K562 (cell line): ENCODE measurements at regions of chr17 and their contacts with region 1.

Region 1: DNA sequence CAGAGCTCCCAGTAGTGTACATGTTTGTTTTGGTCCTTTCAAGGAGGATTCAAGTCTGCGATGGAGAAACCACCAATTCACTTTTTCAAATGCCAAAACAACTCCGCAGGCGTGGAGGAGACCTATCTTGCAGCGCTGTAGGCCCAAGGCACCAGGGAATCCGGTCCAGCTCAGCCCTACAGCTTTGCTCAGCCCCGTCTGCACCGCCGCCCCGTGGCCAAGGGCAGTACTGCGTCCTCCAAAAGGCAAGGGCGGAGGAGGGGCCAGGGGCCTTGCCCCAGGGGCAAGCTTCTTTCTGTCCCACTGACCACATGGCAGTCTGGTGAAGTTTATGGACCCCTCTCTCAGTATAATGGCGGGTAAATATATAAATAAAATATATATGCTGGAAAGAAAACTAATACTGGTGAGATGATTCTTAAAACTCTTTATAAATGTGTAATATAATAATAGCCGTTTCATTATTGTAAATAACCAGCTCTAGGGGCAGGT is 709 bp upstream of the CD300LG start:
- DNase-seq: peak; percentile 83 to 92 (median 90)
- ATAC-seq: peak; percentile 99
- H3K4me3 ChIP-seq: no peak overlapping the region
- H3K27ac ChIP-seq: no peak overlapping the region
- H3K4me1 ChIP-seq: peaks cover 6 to 17% of the 10 kb centered on the region in 2 experiments; a peak in 2 of 5 replicates
- H3K27me3 ChIP-seq: peaks cover 10 to 21% of the 10 kb centered on the region in 2 experiments
- CTCF ChIP-seq: peak; percentile 86 to 97 (median 95)
- EP300 ChIP-seq: no peak
- POLR2A ChIP-seq: no peak
- RAD21 ChIP-seq: peak; percentile 32 to 83; a peak in 3 of 4 replicates

Region 2: DNA sequence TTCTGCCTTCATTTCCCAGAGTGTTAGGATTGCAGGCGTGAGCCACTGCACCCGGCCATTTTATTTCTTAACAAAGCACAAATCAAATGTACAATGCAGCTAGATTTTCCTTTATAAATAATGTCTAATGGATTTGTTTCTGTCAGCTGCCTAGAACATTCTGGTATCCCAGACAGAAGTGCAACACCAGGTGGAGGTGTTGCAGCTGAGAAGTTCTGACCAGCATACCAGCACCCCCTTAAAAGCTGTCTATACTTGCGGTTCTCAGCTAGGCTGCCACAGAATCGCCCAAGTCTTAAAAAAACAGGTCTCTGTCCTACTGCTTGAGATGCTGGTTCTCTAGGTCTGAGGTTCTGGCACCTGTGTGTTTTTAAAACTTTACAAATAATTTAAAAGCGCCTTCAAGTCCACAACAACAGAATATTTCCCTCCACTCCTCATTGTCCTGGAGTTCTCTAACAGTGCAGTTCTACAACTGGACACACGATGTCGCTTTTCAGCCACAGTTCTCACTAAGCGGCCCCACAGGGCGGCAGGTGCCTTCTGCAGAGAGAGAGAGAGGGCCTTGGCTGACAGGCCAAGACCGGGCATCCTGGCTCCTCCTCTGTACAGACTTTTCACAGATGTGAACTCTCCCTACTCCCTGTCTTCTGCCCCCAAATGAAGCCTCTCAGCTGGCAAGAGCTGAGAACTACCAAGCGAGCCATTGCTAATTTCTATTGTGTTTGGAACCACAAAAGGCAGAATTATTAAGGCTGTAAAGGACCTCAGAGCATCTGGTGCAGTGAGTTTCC is 152.0 kb before region 1 on chr17:
- CTCF ChIA-PET with region 1: interaction called, 17 read pairs
- POLR2A ChIA-PET with region 1: no interaction called
- in situ Hi-C with region 1: no loop called
- intact Hi-C with region 1: loop called (anchors 10 kb)
- DNase-seq: peak; percentile 69 to 81 (median 77)
- ATAC-seq: peak; percentile 99
- H3K4me3 ChIP-seq: no peak overlapping the region
- H3K27ac ChIP-seq: no peak overlapping the region
- H3K4me1 ChIP-seq: no peaks in the 10 kb centered on the region
- H3K27me3 ChIP-seq: peaks cover 0 to 42% of the 10 kb centered on the region in 2 experiments; a peak in 2 of 5 replicates
- CTCF ChIP-seq: peak; percentile 90 to 97 (median 97)
- EP300 ChIP-seq: no peak
- POLR2A ChIP-seq: no peak
- RAD21 ChIP-seq: peak; percentile 93 to 97

Region 3: GRCh38 chr17:43778337-43779144 is 67.7 kb before region 1 on chr17 and contains the start of gene DUSP3:
- CTCF ChIA-PET with region 1: interaction called, 5 read pairs
- POLR2A ChIA-PET with region 1: interaction called, 3 read pairs
- in situ Hi-C with region 1: no loop called
- intact Hi-C with region 1: loop called (anchors 2 kb)
- DNase-seq: peak; percentile 80 to 95 (median 94)
- ATAC-seq: peak; percentile 99
- H3K4me3 ChIP-seq: peak within 1 kb of the TSS; percentile 73
- H3K27ac ChIP-seq: peak within 1 kb of the TSS; percentile 73; the same call in 2 of the 3 replicates
- H3K4me1 ChIP-seq: peaks cover 7 to 20% of the 10 kb centered on the region in 2 experiments; a peak in 4 of 5 replicates
- H3K27me3 ChIP-seq: peaks cover 27 to 37% of the 10 kb centered on the region in 2 experiments
- CTCF ChIP-seq: no peak
- EP300 ChIP-seq: no peak
- POLR2A ChIP-seq: peak; percentile 80
- RAD21 ChIP-seq: no peak
- polyA plus RNA-seq, gene DUSP3: 4.1 to 5.0 TPM